ENCODE measurements at regions of chr1 and their contacts with region 1.

Region 1: DNA sequence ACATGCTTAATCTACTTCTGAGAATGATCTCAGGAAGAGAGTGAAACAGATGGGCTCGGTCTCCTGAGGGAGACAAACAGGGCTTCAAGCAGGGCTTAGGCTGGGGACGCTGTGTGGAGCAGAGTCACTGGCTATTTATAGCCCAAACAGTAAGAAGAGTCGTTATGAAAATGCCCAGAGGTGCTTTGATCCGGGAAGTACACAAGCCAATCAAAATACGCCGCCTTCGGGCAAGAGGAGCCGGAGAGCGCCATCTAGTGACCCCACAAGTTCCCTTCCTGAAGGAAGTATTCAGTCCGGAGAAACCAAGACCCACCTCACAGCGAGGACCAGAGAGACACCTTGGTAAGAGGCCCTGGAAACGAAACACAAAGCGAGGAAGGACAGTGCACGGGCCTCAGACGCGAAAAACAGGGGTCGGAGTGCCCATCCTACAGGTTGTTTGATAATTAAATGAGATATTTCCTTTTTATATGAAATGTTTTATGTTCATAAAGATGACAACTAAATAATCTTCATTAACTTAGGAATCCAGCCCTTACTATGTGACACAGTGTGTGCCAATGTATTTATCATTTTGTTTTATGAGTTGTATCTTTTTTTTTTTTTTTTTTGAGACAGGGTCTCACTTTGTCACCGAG is 25.0 kb upstream of the SCCPDH start:
- DNase-seq: peak; percentile 93
- H3K4me3 Mint-ChIP-seq: peak overlapping the region; percentile 32
- H3K27ac Mint-ChIP-seq: peak overlapping the region; percentile 30
- H3K4me1 Mint-ChIP-seq: peaks cover 2% of the 10 kb centered on the region
- H3K27me3 Mint-ChIP-seq: peaks cover 6% of the 10 kb centered on the region

Region 2: DNA sequence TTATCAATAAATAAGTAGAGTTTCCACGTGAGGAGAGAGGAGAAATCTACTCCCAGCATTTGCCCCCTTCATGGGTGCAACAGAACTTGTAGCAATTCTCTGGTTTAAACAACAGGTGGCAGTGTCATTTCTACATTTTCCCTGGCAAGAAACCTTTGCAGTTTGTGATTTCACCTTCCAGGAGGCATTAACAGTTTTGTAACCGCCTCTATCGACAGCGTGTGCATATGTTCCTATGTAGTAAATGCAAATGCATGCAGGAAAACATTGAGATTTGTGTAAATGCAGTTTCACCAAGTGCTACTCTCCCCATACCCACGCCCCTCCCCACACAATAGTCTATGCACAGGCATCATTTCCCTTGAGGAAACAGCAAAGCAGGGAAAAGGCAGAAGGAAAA is 686.9 kb before region 1 on chr1:
- CTCF ChIA-PET with region 1: no interaction called
- intact Hi-C with region 1: loop called (anchors 5 kb)
- DNase-seq: peak; percentile 11
- H3K4me3 Mint-ChIP-seq: no peak overlapping the region
- H3K27ac Mint-ChIP-seq: no peak overlapping the region
- H3K4me1 Mint-ChIP-seq: no peaks in the 10 kb centered on the region
- H3K27me3 Mint-ChIP-seq: no peaks in the 10 kb centered on the region

Region 3: DNA sequence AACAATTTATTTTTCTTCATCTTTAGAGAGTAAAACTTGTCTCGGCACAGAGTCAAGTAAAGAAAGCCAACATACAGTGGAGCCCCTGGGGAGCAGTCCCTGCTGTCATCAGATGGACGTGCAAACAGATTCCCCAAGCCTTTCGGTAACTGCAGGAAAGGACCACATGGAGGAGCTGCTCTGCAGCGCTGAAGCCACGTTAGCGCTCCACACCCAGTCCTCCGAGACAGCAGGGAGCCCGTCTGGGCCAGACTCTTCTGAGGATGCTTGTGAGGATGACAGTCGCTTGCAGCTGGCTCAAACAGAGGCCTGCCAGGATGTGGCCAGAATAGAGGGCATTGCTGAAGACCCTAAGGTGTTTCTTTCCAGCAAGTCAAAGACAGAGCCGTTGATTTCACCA is 52.1 kb before region 1 on chr1:
- CTCF ChIA-PET with region 1: no interaction called
- intact Hi-C with region 1: no loop called
- DNase-seq: no peak
- H3K4me3 Mint-ChIP-seq: no peak overlapping the region
- H3K27ac Mint-ChIP-seq: no peak overlapping the region
- H3K4me1 Mint-ChIP-seq: peaks cover 11% of the 10 kb centered on the region
- H3K27me3 Mint-ChIP-seq: no peaks in the 10 kb centered on the region

Region 4: GRCh38 chr1:246724016-246724730 is 25.0 kb after region 1 on chr1 and contains the start of gene SCCPDH:
- CTCF ChIA-PET with region 1: interaction called, 3 read pairs
- intact Hi-C with region 1: loop called (anchors 1 kb)
- DNase-seq: peak; percentile 64
- H3K4me3 Mint-ChIP-seq: peak within 1 kb of the TSS; percentile 88
- H3K27ac Mint-ChIP-seq: peak within 1 kb of the TSS; percentile 66
- H3K4me1 Mint-ChIP-seq: peaks cover 10% of the 10 kb centered on the region
- H3K27me3 Mint-ChIP-seq: no peaks in the 10 kb centered on the region
- total RNA-seq, gene SCCPDH: 23.8 to 24.3 TPM

Region 5: GRCh38 chr1:246837418-246838117 is 138.4 kb after region 1 on chr1:
- CTCF ChIA-PET with region 1: no interaction called
- intact Hi-C with region 1: loop called (anchors 10 kb)
- DNase-seq: no peak
- H3K4me3 Mint-ChIP-seq: no peak overlapping the region
- H3K27ac Mint-ChIP-seq: no peak overlapping the region
- H3K4me1 Mint-ChIP-seq: no peaks in the 10 kb centered on the region
- H3K27me3 Mint-ChIP-seq: peaks cover 5% of the 10 kb centered on the region